ENCODE measurements at regions of chr11 and their contacts with region 1.

Region 1: GRCh38 chr11:29826878-29827277 is 190.0 kb downstream of the KCNA4 start:
- DNase-seq: no peak
- ATAC-seq: no peak

Region 2: GRCh38 chr11:29676993-29677392 is 149.9 kb before region 1 on chr11:
- intact Hi-C with region 1: no loop called
- DNase-seq: no peak
- ATAC-seq: no peak

Region 3: GRCh38 chr11:29773656-29774264 is 53.1 kb before region 1 on chr11:
- intact Hi-C with region 1: loop called (anchors 10 kb)
- DNase-seq: peak; percentile 57
- ATAC-seq: peak; percentile 100